AG04450 (cell line): ENCODE measurements at regions of chr3 and their contacts with region 1.

Region 1: GRCh38 chr3:133547432-133548041 is 25.9 kb upstream of the CDV3 start:
- DNase-seq: no peak
- H3K4me3 ChIP-seq: no peak overlapping the region
- H3K27ac ChIP-seq: peak overlapping the region; percentile 86
- H3K27me3 ChIP-seq: no peaks in the 10 kb centered on the region
- CTCF ChIP-seq: no peak

Region 2: GRCh38 chr3:133295199-133295901 is 252.2 kb before region 1 on chr3:
- CTCF ChIA-PET with region 1: no interaction called
- POLR2A ChIA-PET with region 1: no interaction called
- DNase-seq: peak; percentile 23
- H3K4me3 ChIP-seq: no peak overlapping the region
- H3K27ac ChIP-seq: no peak overlapping the region
- H3K27me3 ChIP-seq: no peaks in the 10 kb centered on the region
- CTCF ChIP-seq: no peak

Region 3: DNA sequence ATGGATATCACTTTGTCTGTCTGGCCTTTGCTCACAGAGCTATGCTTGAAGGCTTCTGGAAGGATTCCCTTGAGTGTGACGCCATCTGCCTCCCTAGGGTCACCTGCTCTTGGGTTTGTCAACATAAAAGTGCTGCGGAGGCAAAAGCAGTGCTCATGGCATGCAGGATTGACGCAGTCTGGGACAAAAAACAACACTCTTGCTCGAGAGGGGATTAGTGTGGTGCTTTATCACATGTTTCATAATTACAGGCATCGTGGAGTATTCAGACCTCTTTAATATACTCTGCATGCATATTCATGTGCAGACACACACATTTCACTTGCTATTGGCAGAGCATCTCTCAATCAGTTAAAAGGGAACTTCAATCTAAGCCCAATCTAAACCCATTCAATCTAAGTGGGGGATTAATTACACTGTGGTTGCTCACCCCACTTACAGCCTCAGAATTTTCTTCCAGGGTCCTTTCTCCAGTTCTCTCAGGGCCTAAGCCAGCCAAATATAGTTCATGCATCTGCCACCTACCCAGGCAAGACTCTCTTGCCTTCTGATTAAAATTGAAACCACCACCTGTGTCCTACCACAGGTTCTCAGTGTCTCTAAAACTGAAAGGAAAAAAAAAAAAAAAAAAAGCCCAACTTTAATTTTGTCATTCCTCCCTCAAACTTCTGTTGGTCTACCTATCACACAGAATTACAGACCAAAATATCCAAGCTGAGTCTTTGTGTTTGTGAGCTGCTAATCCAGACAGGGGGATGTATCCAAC is 72.1 kb before region 1 on chr3:
- CTCF ChIA-PET with region 1: no interaction called
- POLR2A ChIA-PET with region 1: no interaction called
- DNase-seq: no peak
- H3K4me3 ChIP-seq: no peak overlapping the region
- H3K27ac ChIP-seq: peak overlapping the region; percentile 75
- H3K27me3 ChIP-seq: no peaks in the 10 kb centered on the region
- CTCF ChIP-seq: no peak

Region 4: DNA sequence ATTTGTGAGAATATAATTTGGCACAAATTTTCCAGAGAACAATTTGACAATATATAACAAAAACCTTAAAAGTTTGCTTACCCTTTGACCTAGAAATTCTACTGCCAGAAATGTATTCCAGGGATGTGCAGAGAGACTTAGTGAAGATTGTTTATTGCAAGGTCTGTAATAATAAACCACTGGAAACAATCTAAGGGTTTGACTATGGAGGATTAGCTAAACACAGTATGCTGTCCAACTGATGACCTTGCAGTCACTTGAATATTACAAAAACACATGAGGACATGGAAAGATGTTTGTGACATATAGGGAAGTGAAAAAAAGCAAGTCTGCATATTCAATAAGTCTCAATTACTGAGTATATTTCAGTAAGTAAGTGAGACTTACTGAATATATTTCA is 22.1 kb before region 1 on chr3:
- CTCF ChIA-PET with region 1: no interaction called
- POLR2A ChIA-PET with region 1: no interaction called
- DNase-seq: no peak
- H3K4me3 ChIP-seq: no peak overlapping the region
- H3K27ac ChIP-seq: no peak overlapping the region
- H3K27me3 ChIP-seq: no peaks in the 10 kb centered on the region
- CTCF ChIP-seq: no peak

Region 5: GRCh38 chr3:133535971-133536634 is 11.4 kb before region 1 on chr3:
- CTCF ChIA-PET with region 1: interaction called, 5 read pairs
- POLR2A ChIA-PET with region 1: interaction called, 15 read pairs
- DNase-seq: peak; percentile 88
- H3K4me3 ChIP-seq: peak overlapping the region; percentile 41
- H3K27ac ChIP-seq: peak overlapping the region; percentile 97
- H3K27me3 ChIP-seq: no peaks in the 10 kb centered on the region
- CTCF ChIP-seq: no peak